Colonic mucosa (tissue), 4 donors: ENCODE measurements at regions of chr9 and their contacts with region 1.

Region 1: GRCh38 chr9:117149996-117150395 is 264.9 kb downstream of the ASTN2 start:
- DNase-seq: no peak
- H3K4me3 ChIP-seq: no peak overlapping the region
- H3K27ac ChIP-seq: no peak overlapping the region
- H3K4me1 ChIP-seq: no peaks in the 10 kb centered on the region
- H3K27me3 ChIP-seq: no peaks in the 10 kb centered on the region
- CTCF ChIP-seq: no peak

Region 2: DNA sequence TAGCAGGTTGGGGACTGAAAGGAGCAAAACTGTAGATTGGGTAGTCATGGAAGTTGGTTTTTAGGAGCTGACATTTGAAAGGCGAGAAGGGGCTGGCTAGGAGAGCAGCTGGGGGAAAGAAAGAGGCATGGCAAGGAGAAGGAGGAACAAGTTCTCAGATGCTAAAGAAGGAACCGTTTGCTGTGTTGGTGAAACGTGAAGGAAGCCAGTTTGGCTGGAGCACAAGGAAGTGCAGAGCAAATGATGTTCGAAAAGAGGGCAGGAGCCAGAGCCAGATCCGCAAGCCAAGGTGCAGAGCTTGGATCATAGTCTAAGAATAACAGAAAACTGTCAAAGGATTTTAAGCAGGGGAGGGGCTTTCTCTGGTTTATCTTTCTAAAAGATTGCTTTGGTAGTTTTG is 11.8 kb before region 1 on chr9:
- intact Hi-C with region 1: loop called (anchors 2 kb)
- DNase-seq: no peak
- H3K4me3 ChIP-seq: no peak overlapping the region
- H3K27ac ChIP-seq: no peak overlapping the region
- H3K4me1 ChIP-seq: no peaks in the 10 kb centered on the region
- H3K27me3 ChIP-seq: no peaks in the 10 kb centered on the region
- CTCF ChIP-seq: no peak